ENCODE measurements at regions of chr13 and their contacts with region 1.

Region 1: GRCh38 chr13:49681842-49682435 is 9.3 kb downstream of the EBPL start:
- DNase-seq: no peak
- H3K4me3 ChIP-seq: no peak overlapping the region
- H3K4me3 Mint-ChIP-seq: no peak overlapping the region
- H3K27ac ChIP-seq: no peak overlapping the region
- H3K27ac Mint-ChIP-seq: peak overlapping the region in 1 of 7 donors; percentile 7
- H3K4me1 ChIP-seq: no peaks in the 10 kb centered on the region
- H3K4me1 Mint-ChIP-seq: no peaks in the 10 kb centered on the region
- H3K27me3 ChIP-seq: no peaks in the 10 kb centered on the region
- H3K27me3 Mint-ChIP-seq: no peaks in the 10 kb centered on the region
- CTCF ChIP-seq: no peak

Region 2: DNA sequence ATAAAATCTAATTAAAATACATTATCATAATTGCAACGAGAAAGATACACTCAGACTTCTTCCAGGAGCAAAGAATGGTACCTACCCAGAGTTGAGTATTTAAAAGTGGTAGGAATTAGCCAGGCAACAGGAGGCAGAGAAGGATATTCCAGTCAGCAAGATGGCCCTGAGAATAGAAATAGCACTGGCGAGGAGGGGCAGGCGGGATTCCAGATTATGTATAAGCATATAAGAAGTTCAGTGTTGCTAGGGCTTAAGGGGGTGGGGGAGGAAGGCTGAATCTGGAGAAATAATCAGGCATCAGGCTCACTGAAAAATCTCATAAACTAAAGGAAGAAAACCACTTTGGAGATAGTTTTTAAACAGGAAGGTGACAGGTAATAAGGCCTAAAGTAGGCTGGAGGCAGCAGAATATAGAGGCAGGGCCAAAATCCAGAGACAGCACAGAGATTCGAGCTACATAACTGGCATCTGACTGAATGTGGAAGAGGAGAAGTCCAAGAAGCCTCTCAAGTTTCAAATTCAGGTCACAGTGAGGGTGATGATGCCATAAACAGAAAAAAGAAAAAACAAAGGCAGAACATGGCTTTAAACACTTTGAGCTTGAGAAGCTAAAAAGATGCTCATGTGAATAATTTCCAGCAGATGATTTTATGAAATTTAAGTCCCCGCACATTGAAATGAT is 103.1 kb after region 1 on chr13:
- intact Hi-C with region 1: loop called in 1 of 2 experiments (anchors 10 kb)
- DNase-seq: no peak
- H3K4me3 ChIP-seq: no peak overlapping the region
- H3K4me3 Mint-ChIP-seq: no peak overlapping the region
- H3K27ac ChIP-seq: no peak overlapping the region
- H3K27ac Mint-ChIP-seq: no peak overlapping the region
- H3K4me1 ChIP-seq: peaks cover under 1 to 7% of the 10 kb centered on the region in 2 donors
- H3K4me1 Mint-ChIP-seq: peaks cover 33% of the 10 kb centered on the region
- H3K27me3 ChIP-seq: no peaks in the 10 kb centered on the region
- H3K27me3 Mint-ChIP-seq: no peaks in the 10 kb centered on the region
- CTCF ChIP-seq: no peak

Measured in CD14-positive monocyte (primary cell).